Esophagus squamous epithelium (tissue), 5 donors: ENCODE measurements at regions of chr14 and their contacts with region 1.

Region 1: GRCh38 chr14:88667555-88668273 is 104.9 kb downstream of the ZC3H14 start:
- DNase-seq: no peak
- H3K4me3 ChIP-seq: no peak overlapping the region
- H3K27ac ChIP-seq: peak overlapping the region in 1 of 4 donors; percentile 3
- H3K4me1 ChIP-seq: peaks cover 0 to 5% (median 3%) of the 10 kb centered on the region in 3 donors
- H3K27me3 ChIP-seq: no peaks in the 10 kb centered on the region
- CTCF ChIP-seq: peak; percentile 56 to 80 (median 74)
- POLR2A ChIP-seq: no peak

Region 2: DNA sequence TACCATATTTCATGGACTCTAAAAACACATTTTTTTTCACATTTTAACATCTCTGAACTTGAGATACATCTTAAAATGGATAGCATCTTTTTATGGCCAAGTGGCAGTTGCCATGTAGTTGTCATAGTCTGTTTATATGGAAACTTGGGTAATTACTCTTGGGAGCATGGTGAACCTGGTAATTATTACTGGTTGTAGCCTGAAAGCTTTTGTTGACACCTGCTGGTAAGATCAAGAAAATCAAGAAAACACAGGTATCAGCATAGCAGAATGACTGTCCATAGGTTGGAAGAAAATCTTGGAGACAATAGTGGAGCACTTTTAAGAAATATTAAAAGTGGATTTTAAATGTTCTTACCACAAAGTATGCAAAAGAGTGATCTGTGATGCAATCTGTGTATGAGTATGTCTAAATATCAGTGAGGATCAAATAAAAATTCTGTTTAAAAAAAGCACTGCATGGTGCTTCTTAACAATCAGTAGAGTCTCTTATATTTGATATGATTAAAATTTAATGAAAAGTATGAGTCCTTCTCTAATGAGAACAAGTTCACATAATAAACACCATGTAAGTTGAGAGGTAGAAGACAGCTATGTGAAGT is 200.9 kb after region 1 on chr14:
- intact Hi-C with region 1: loop called (anchors 5 kb)
- DNase-seq: no peak
- H3K4me3 ChIP-seq: no peak overlapping the region
- H3K27ac ChIP-seq: no peak overlapping the region
- H3K4me1 ChIP-seq: no peaks in the 10 kb centered on the region
- H3K27me3 ChIP-seq: no peaks in the 10 kb centered on the region
- CTCF ChIP-seq: peak in 4 of 6 experiments; percentile 38 to 63 (median 46)
- POLR2A ChIP-seq: no peak